Activated naive CD4-positive, alpha-beta T cell treated with anti-CD3 and anti-CD28 coated beads for 36 hours (primary cell): ENCODE measurements at regions of chr2 and their contacts with region 1.

Region 1: GRCh38 chr2:237686659-237687136 is 59.3 kb downstream of the LRRFIP1 start:
- DNase-seq: no peak
- H3K4me3 Mint-ChIP-seq: no peak overlapping the region
- H3K27ac Mint-ChIP-seq: peak overlapping the region; percentile 63
- H3K4me1 Mint-ChIP-seq: peaks cover 44% of the 10 kb centered on the region
- H3K27me3 Mint-ChIP-seq: no peaks in the 10 kb centered on the region

Region 2: GRCh38 chr2:237603718-237604362 is 82.9 kb before region 1 on chr2:
- CTCF ChIA-PET with region 1: no interaction called
- intact Hi-C with region 1: loop called (anchors 1 kb)
- DNase-seq: peak; percentile 82
- H3K4me3 Mint-ChIP-seq: peak overlapping the region; percentile 20
- H3K27ac Mint-ChIP-seq: peak overlapping the region; percentile 68
- H3K4me1 Mint-ChIP-seq: peaks cover 18% of the 10 kb centered on the region
- H3K27me3 Mint-ChIP-seq: no peaks in the 10 kb centered on the region

Region 3: GRCh38 chr2:237818066-237818473 is 131.4 kb after region 1 on chr2:
- CTCF ChIA-PET with region 1: no interaction called
- intact Hi-C with region 1: loop called (anchors 1 kb)
- DNase-seq: no peak
- H3K4me3 Mint-ChIP-seq: no peak overlapping the region
- H3K27ac Mint-ChIP-seq: no peak overlapping the region
- H3K4me1 Mint-ChIP-seq: peaks cover 26% of the 10 kb centered on the region
- H3K27me3 Mint-ChIP-seq: no peaks in the 10 kb centered on the region